ENCODE measurements at regions of chr5 and their contacts with region 1.

Region 1: GRCh38 chr5:90866333-90866732 is 307.7 kb downstream of the ADGRV1 start:
- DNase-seq: no peak
- H3K4me3 ChIP-seq: no peak overlapping the region
- H3K27ac ChIP-seq: no peak overlapping the region
- H3K4me1 ChIP-seq: peaks cover 0 to 6% (median 1%) of the 10 kb centered on the region in 4 donors
- H3K27me3 ChIP-seq: no peaks in the 10 kb centered on the region
- CTCF ChIP-seq: peak; percentile 41 to 60 (median 52)
- EP300 ChIP-seq: no peak
- POLR2A ChIP-seq: no peak

Region 2: DNA sequence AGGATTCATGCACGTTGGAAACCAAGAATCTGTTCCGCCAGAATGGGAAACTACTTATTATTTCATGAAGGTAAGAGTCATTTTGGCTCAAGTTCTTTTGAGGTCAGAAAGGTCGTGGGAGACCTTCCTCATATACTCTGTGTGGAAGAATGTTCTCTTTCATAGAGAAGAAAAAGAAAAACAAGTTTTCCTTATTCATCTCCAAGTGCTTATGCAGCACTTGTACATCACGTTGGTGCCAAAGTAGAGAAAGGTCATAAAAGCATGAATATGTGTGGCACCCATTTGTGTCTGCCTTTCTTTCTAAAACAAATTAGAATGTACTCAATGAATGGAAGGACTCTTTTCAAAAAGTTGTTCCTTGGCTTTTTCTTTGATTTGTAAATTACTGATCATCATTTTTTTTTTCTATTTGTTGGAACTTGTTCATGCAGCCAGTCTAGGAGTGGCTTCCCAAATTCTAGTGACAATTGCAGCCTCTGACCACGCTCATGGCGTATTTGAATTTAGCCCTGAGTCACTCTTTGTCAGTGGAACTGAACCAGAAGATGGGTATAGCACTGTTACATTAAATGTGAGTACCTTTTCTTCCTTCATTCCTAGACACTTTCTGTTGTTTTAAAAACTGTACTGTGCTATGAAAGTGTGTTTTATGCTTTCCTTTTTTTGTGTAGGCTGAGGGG is 185.3 kb before region 1 on chr5:
- in situ Hi-C with region 1: no loop called
- intact Hi-C with region 1: no loop called
- DNase-seq: no peak
- H3K4me3 ChIP-seq: no peak overlapping the region
- H3K27ac ChIP-seq: no peak overlapping the region
- H3K4me1 ChIP-seq: no peaks in the 10 kb centered on the region
- H3K27me3 ChIP-seq: no peaks in the 10 kb centered on the region
- CTCF ChIP-seq: no peak
- EP300 ChIP-seq: no peak
- POLR2A ChIP-seq: no peak

Region 3: GRCh38 chr5:91074615-91075014 is 208.3 kb after region 1 on chr5:
- in situ Hi-C with region 1: loop called in 1 of 4 experiments (anchors 25 kb)
- intact Hi-C with region 1: no loop called
- DNase-seq: no peak
- H3K4me3 ChIP-seq: no peak overlapping the region
- H3K27ac ChIP-seq: no peak overlapping the region
- H3K4me1 ChIP-seq: peaks cover 0 to 15% (median 0%) of the 10 kb centered on the region in 4 donors
- H3K27me3 ChIP-seq: no peaks in the 10 kb centered on the region
- CTCF ChIP-seq: peak in 4 of 5 experiments; percentile 17 to 42 (median 26)
- EP300 ChIP-seq: no peak
- POLR2A ChIP-seq: no peak

Region 4: DNA sequence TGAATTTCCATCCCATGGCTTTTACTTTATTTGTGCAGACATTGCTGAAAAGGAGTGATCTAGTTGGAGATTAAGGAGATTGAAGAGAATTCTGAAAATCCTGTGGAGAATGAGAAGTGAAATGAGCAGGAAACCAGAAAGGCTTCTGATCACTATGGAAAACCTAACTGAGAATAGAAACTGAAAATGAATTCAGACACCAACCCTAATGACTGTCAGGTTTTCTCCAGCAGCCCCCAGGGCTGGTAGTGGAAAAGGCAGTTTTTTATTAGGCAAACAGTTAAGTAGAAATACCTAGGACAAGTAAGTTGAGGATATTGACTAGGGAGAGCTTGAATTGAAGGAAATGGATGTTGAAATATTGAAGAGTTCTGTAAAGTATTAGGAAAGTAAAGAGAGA is 531.5 kb after region 1 on chr5:
- in situ Hi-C with region 1: loop called in 2 of 4 experiments (anchors 10 to 25 kb)
- intact Hi-C with region 1: no loop called
- DNase-seq: no peak
- H3K4me3 ChIP-seq: no peak overlapping the region
- H3K27ac ChIP-seq: no peak overlapping the region
- H3K4me1 ChIP-seq: no peaks in the 10 kb centered on the region
- H3K27me3 ChIP-seq: no peaks in the 10 kb centered on the region
- CTCF ChIP-seq: no peak
- EP300 ChIP-seq: no peak
- POLR2A ChIP-seq: no peak

Region 5: DNA sequence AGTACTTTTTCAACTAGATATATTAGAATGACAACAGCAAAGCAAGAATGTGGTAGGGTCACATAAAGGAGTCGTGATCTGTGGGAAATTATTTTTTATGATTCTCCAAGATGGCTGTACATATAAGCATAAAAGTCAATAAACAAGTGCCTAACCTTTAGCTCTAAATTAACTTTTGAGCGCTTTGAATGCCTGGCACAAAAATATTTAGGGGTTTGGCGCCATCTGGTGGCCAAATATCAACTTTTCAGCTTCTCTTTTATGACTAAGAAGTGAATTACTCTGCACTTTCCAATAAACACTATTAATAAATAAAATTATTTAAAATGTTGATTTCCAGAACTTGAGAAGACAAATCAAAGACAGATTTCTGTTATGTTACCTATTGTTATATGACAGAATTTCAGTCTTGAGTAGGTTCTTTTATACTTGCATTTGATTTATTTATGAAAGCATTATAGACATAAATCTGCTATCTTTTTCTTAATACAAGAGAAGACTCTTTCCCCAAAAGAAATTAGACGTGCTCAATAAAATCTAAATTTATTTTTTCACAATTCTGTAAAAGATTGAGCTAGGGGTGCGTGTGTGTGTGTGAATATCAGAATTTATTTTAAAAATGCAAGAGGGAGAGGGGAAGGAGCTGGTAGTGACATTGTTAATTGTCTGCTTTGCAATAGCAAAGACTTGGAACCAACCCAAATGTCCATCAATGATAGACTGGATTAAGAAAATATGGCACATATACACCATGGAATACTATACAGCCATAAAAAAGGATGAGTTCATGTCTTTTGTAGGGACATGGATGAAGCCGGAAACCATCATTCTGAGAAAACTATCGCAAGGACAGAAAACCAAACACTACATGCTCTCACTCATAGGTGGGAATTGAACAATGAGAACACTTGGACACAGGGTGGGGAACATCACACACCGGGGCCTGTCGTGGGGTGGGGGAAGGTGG is 553.5 kb after region 1 on chr5:
- in situ Hi-C with region 1: loop called in 3 of 4 experiments (anchors 10 to 25 kb)
- intact Hi-C with region 1: loop called (anchors 5 kb)
- DNase-seq: peak; percentile 77
- H3K4me3 ChIP-seq: no peak overlapping the region
- H3K27ac ChIP-seq: no peak overlapping the region
- H3K4me1 ChIP-seq: peaks cover 0 to 10% (median 1%) of the 10 kb centered on the region in 4 donors
- H3K27me3 ChIP-seq: no peaks in the 10 kb centered on the region
- CTCF ChIP-seq: peak; percentile 74 to 89 (median 81)
- EP300 ChIP-seq: no peak
- POLR2A ChIP-seq: no peak

Measured in transverse colon (tissue), 4 donors.